T-cell (primary cell): ENCODE measurements at regions of chr2 and their contacts with region 1.

Region 1: GRCh38 chr2:98385050-98385699 is 38.9 kb downstream of the CNGA3 start:
- DNase-seq: peak; percentile 18 to 79 (median 62)
- ATAC-seq: peak; percentile 72 to 85 (median 77)
- H3K4me3 ChIP-seq: no peak overlapping the region
- H3K4me3 Mint-ChIP-seq: no peak overlapping the region
- H3K27ac ChIP-seq: no peak overlapping the region
- H3K27ac Mint-ChIP-seq: no peak overlapping the region
- H3K4me1 ChIP-seq: peaks cover 0 to 2% of the 10 kb centered on the region in 2 experiments
- H3K4me1 Mint-ChIP-seq: peaks cover 0 to 3% (median 0%) of the 10 kb centered on the region in 3 donors
- H3K27me3 ChIP-seq: peaks cover 0 to 47% of the 10 kb centered on the region in 2 experiments
- H3K27me3 Mint-ChIP-seq: peaks cover 7 to 13% of the 10 kb centered on the region in 2 donors

Region 2: DNA sequence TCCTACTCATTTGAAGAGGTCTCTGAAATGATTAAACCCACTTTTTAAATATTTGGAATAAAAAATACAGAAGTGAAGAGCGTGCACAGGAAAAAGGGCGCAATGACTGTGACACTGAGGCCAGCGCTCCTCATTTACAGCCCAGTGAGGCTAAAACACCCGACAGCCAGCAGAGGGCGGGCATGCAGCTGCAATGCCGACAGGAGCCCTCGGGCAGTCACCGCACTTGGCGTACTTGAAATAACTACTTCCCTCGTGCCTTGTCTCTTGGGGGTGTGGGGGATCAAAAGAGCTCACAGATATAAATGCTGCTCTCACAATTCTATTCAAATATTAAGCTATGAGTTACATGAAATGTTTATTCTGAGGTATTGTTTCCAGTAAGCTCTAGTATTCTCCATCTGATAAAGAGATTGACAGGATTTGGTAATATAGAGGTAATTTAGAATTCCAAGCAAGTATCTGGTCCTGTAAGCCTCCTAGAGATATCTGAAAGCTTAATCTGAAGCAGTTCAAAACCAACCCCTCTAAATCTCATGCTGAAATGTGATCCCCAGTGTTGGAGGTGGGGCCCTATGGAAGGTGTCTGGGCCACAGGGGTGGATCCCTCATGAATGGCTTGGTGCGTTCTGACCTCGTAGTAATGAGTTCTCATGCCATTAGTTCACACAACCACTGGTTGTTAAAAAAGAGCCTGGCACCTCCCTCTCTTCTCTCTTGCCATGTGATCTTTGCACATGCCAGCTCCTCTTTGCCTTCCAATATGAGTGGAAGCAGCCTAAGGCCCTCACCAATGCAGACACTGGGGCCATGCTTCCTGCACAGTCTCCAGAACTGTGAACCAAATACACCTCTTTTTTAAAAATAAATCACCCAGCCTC is 578.2 kb before region 1 on chr2:
- CTCF ChIA-PET with region 1: interaction called, 6 to 33 read pairs
- POLR2A ChIA-PET with region 1: no interaction called
- DNase-seq: peak; percentile 53 to 81 (median 72)
- ATAC-seq: peak; percentile 89 to 94 (median 94)
- H3K4me3 ChIP-seq: no peak overlapping the region
- H3K4me3 Mint-ChIP-seq: no peak overlapping the region
- H3K27ac ChIP-seq: no peak overlapping the region
- H3K27ac Mint-ChIP-seq: no peak overlapping the region
- H3K4me1 ChIP-seq: no peaks in the 10 kb centered on the region
- H3K4me1 Mint-ChIP-seq: peaks cover 0 to 2% (median 0%) of the 10 kb centered on the region in 3 donors
- H3K27me3 ChIP-seq: no peaks in the 10 kb centered on the region
- H3K27me3 Mint-ChIP-seq: no peaks in the 10 kb centered on the region

Region 3: DNA sequence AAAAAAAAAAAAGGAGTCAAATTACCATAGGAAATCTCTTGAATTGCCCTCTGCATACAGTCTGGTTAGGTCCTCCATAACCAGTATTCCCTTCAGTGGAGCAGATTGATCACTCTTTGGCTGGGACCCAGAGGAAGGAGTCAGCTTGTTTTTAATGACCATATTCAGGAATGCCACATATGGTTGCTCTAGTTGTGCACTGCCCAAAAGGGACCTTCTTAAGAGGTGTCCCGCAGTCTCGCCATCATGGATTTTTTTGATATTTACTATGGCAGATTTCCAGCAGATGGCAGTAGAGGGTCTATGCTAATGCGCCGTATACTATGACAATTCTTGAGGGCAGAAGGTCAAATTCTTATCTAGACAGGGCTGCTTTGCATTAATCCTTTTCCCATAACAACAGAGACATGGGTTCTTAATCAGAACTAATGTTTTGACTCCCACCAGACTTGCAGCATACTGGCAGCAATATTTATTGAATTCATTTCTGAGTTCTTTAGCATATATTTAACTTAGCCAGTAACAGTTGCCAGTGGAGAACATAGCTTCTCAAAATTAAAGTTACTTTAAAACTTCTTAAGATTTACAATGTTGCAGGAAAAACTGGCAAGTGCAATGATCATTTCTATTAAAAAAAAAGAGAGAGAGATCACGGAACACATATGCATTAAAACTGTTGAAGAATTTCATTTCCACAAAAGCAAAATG is 27.7 kb after region 1 on chr2:
- CTCF ChIA-PET with region 1: no interaction called
- POLR2A ChIA-PET with region 1: no interaction called
- DNase-seq: peak in 33 of 35 experiments; percentile 13 to 89 (median 43)
- ATAC-seq: peak; percentile 84 to 90 (median 84)
- H3K4me3 ChIP-seq: no peak overlapping the region
- H3K4me3 Mint-ChIP-seq: no peak overlapping the region
- H3K27ac ChIP-seq: no peak overlapping the region
- H3K27ac Mint-ChIP-seq: peak overlapping the region in 1 of 2 donors; percentile 39
- H3K4me1 ChIP-seq: peaks cover 5 to 8% of the 10 kb centered on the region in 2 experiments
- H3K4me1 Mint-ChIP-seq: peaks cover 4 to 6% (median 6%) of the 10 kb centered on the region in 3 donors
- H3K27me3 ChIP-seq: no peaks in the 10 kb centered on the region
- H3K27me3 Mint-ChIP-seq: no peaks in the 10 kb centered on the region